Activated CD4-positive, alpha-beta memory T cell treated with anti-CD3 and anti-CD28 coated beads, Interleukin-2, amount 10 ng/mL, durations not matched to agents 7 days and 5 days (primary cell): ENCODE measurements at regions of chr15 and their contacts with region 1.

Region 1: DNA sequence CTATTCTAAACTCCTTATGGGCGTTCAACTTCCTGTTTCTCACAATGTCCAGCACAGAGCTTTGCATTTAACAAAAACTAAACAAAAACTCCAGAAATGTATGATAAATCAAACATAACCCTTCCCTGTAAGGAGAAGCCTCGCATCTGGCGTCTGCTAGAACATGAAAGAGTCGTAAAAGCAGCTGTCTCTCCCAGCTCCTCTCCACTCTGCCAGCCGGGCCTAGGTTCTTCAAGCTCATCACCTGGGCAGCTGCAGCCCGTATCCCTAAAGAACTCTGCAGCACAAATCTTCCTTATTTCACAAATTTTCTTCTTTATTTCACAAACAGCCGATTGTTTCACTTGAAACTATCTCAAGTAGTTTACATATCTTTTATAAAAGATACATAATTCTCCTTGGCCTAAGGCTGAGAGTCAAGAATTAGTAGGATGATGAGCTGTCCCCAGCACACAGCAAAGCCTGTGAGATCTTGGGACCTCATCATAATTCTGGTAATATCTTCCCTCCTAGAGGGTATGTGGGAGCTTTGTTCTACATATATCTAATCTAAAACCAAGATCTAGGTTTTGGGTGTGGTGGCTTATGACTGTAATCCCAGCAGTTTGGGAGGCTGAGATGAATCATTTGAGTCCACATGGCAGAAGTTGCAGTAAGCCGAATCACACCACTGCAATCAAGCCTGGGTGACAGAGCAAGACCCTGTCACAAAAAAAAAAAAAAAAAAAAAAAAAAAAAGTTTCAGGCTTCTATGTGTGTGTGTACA is 35.3 kb downstream of the ANXA2 start:
- DNase-seq: peak; percentile 62
- H3K4me3 Mint-ChIP-seq: no peak overlapping the region
- H3K27ac Mint-ChIP-seq: peak overlapping the region; percentile 80
- H3K4me1 Mint-ChIP-seq: peaks cover 47% of the 10 kb centered on the region
- H3K27me3 Mint-ChIP-seq: no peaks in the 10 kb centered on the region

Region 2: GRCh38 chr15:60374628-60375081 is 12.2 kb after region 1 on chr15:
- CTCF ChIA-PET with region 1: interaction called, 10 read pairs
- POLR2A ChIA-PET with region 1: interaction called, 3 read pairs
- DNase-seq: no peak
- H3K4me3 Mint-ChIP-seq: no peak overlapping the region
- H3K27ac Mint-ChIP-seq: no peak overlapping the region
- H3K4me1 Mint-ChIP-seq: peaks cover 27% of the 10 kb centered on the region
- H3K27me3 Mint-ChIP-seq: no peaks in the 10 kb centered on the region

Region 3: DNA sequence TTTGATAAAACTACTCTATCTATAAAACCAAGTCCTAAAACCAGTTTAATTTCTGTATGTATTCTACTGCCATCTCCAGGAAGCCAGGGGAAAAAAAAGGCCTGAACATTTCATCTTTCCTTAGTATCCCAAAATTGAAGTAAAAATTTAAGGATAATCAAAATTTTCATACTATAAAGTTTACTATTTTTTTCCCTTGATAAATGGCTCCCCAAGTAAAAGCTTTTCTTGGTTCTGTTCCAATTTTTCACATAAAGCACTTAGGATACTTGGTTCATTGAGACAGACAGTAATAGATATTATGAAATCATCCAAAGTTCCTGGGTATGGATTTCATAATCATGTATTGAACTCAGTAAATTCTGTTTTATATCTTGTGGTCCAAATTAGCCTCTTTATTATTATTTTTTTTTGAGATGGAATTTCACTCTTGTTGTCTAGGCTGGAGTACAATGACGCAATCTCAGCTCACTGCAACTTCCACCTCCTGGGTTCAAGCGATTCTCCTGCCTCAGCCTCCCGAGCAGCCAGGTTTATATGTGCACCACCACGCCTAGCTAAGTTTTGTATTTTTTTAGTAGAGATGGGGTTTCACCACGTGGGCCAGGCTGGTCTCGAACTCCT is 81.9 kb after region 1 on chr15:
- CTCF ChIA-PET with region 1: interaction called, 23 read pairs
- POLR2A ChIA-PET with region 1: no interaction called
- DNase-seq: no peak
- H3K4me3 Mint-ChIP-seq: no peak overlapping the region
- H3K27ac Mint-ChIP-seq: no peak overlapping the region
- H3K4me1 Mint-ChIP-seq: peaks cover 1% of the 10 kb centered on the region
- H3K27me3 Mint-ChIP-seq: no peaks in the 10 kb centered on the region

Region 4: DNA sequence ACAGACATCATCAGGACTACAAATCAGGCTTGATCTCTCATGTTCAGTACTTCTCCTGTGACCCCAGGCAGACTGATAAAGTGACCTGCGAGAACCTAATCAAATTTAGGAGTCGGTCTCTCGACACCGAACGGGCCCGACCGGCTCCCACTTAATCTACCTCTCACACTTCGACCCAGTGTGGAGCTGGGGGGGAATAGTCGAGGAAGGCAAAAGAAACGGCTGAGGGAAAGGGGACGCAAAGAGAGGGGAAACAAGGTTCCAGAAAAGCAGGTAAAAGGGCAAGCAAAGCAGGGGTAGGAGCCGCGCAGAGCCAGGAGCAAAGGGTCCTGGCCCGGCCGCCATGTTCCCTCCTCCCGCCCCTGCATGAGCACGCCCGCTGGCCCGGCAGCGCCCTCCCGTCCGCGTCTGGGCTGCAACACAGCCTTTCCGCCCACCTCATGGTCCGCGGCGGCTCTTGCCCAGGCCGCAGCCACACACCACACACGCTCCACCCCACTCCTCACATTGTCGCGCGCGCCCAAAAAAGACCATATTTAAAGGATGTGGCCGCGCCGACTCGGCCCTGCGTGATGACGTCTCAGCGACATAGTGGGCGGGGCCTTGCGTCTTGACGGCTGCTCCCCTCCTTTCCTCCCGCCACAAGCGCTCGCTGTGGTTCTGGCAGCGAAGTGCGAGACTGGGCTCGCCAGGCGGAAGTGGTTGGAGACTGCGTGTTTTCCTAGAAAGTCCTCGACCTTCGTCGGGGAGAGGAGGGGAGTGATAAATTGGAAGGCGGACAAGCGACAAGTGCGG is 116.3 kb after region 1 on chr15 and contains the start of gene ICE2:
- CTCF ChIA-PET with region 1: interaction called, 3 read pairs
- POLR2A ChIA-PET with region 1: interaction called, 12 read pairs
- DNase-seq: peak; percentile 98
- H3K4me3 Mint-ChIP-seq: peak within 1 kb of the TSS; percentile 98
- H3K27ac Mint-ChIP-seq: peak within 1 kb of the TSS; percentile 97
- H3K4me1 Mint-ChIP-seq: peaks cover 59% of the 10 kb centered on the region
- H3K27me3 Mint-ChIP-seq: no peaks in the 10 kb centered on the region
- total RNA-seq, gene ICE2: 56.9 to 60.4 TPM

Region 5: DNA sequence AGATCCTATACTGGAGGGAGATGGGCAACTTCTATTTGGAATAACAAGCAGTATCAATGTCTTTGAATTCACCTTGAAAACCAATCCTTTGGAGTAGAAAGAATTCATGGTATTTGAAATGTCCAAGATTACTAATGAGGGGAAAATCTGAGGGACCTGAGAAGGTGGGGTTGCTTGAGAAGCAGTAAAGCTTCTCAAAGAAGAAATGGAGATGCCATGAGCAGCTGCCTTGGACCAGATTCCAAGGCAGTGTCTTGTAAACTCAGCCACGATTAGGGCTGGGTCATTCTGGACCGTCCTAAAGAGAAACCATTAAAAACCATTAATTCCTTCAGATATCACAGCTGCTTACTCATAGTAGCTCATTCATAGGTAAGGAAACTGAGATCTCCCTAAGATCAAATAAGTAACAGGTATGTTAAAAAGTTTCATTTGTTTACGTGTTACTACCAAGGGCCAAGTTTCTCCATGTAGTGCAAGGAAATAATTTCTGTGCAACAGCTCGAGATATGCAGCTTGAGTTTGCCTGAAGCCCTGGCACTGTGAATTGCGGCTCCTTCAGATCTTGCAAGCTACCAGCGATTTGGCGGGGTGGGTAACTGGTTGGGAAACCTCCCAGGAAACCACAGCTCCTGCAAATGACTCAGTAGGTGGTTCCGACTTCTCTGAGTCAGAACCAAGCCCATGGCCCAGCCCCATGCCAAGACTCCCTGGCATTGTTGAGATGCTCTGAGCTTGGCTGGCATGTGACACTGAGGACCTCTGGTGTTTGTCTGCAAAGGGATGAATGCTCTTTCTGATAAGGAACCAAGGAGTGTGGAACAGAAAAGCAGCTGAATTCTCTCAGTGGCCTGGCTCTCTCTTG is 569.8 kb after region 1 on chr15:
- CTCF ChIA-PET with region 1: interaction called, 18 read pairs
- POLR2A ChIA-PET with region 1: no interaction called
- DNase-seq: peak; percentile 74
- H3K4me3 Mint-ChIP-seq: no peak overlapping the region
- H3K27ac Mint-ChIP-seq: no peak overlapping the region
- H3K4me1 Mint-ChIP-seq: peaks cover 26% of the 10 kb centered on the region
- H3K27me3 Mint-ChIP-seq: peaks cover 53% of the 10 kb centered on the region

Region 6: GRCh38 chr15:61834076-61834697 is 1471.7 kb after region 1 on chr15:
- CTCF ChIA-PET with region 1: interaction called, 10 read pairs
- POLR2A ChIA-PET with region 1: no interaction called
- DNase-seq: peak; percentile 75
- H3K4me3 Mint-ChIP-seq: no peak overlapping the region
- H3K27ac Mint-ChIP-seq: no peak overlapping the region
- H3K4me1 Mint-ChIP-seq: peaks cover 6% of the 10 kb centered on the region
- H3K27me3 Mint-ChIP-seq: peaks cover 9% of the 10 kb centered on the region